CD14-positive monocyte (primary cell): ENCODE measurements at regions of chr22 and their contacts with region 1.

Region 1: GRCh38 chr22:24156913-24157821 is 24.1 kb upstream of the SUSD2 start:
- DNase-seq: peak; percentile 74 to 83 (median 79)
- H3K4me3 ChIP-seq: peak overlapping the region; percentile 78 to 100 (median 90)
- H3K4me3 Mint-ChIP-seq: peak overlapping the region; percentile 96
- H3K27ac ChIP-seq: peak overlapping the region; percentile 1 to 78
- H3K27ac Mint-ChIP-seq: peak overlapping the region; percentile 37 to 91 (median 82)
- H3K4me1 ChIP-seq: peaks cover 49% of the 10 kb centered on the region in 2 donors
- H3K4me1 Mint-ChIP-seq: peaks cover 57% of the 10 kb centered on the region
- H3K27me3 ChIP-seq: no peaks in the 10 kb centered on the region
- H3K27me3 Mint-ChIP-seq: peaks cover 0 to 3% (median 0%) of the 10 kb centered on the region in 3 donors
- CTCF ChIP-seq: peak; percentile 97

Region 2: GRCh38 chr22:24106385-24107381 is 50.5 kb before region 1 on chr22:
- intact Hi-C with region 1: loop called in 1 of 2 experiments (anchors 5 kb)
- DNase-seq: peak in 2 of 3 donors; percentile 15 to 25
- H3K4me3 ChIP-seq: no peak overlapping the region
- H3K4me3 Mint-ChIP-seq: no peak overlapping the region
- H3K27ac ChIP-seq: no peak overlapping the region
- H3K27ac Mint-ChIP-seq: peak overlapping the region in 2 of 7 donors; percentile 26 to 40
- H3K4me1 ChIP-seq: no peaks in the 10 kb centered on the region
- H3K4me1 Mint-ChIP-seq: no peaks in the 10 kb centered on the region
- H3K27me3 ChIP-seq: no peaks in the 10 kb centered on the region
- H3K27me3 Mint-ChIP-seq: peaks cover 0 to 1% (median 0%) of the 10 kb centered on the region in 3 donors
- CTCF ChIP-seq: peak; percentile 13

Region 3: DNA sequence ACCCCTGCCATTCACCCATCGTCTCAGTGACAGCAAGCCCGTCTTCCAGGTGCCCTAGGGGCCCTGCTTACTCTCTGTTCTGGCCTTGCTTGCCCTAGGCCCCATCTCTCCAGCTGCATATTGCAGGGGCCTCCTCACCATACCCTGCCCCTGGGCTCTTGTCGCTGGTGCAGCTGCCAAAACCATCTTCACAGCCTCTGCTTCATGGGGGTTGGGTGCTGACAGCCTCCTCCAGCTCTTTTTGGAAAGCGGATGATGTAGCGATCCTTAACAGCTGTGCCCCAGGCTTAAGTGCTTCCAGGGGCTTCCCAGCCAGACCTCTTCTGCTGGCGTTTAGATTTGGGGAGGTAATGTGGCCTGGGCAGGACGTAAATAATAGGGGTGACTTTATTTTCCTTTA is 37.1 kb before region 1 on chr22:
- intact Hi-C with region 1: loop called in 1 of 2 experiments (anchors 5 kb)
- DNase-seq: no peak
- H3K4me3 ChIP-seq: no peak overlapping the region
- H3K4me3 Mint-ChIP-seq: no peak overlapping the region
- H3K27ac ChIP-seq: no peak overlapping the region
- H3K27ac Mint-ChIP-seq: peak overlapping the region in 1 of 7 donors; percentile 53
- H3K4me1 ChIP-seq: no peaks in the 10 kb centered on the region
- H3K4me1 Mint-ChIP-seq: no peaks in the 10 kb centered on the region
- H3K27me3 ChIP-seq: no peaks in the 10 kb centered on the region
- H3K27me3 Mint-ChIP-seq: peaks cover 0 to 1% (median 0%) of the 10 kb centered on the region in 3 donors
- CTCF ChIP-seq: no peak